ENCODE measurements at regions of chr20 and their contacts with region 1.

Region 1: DNA sequence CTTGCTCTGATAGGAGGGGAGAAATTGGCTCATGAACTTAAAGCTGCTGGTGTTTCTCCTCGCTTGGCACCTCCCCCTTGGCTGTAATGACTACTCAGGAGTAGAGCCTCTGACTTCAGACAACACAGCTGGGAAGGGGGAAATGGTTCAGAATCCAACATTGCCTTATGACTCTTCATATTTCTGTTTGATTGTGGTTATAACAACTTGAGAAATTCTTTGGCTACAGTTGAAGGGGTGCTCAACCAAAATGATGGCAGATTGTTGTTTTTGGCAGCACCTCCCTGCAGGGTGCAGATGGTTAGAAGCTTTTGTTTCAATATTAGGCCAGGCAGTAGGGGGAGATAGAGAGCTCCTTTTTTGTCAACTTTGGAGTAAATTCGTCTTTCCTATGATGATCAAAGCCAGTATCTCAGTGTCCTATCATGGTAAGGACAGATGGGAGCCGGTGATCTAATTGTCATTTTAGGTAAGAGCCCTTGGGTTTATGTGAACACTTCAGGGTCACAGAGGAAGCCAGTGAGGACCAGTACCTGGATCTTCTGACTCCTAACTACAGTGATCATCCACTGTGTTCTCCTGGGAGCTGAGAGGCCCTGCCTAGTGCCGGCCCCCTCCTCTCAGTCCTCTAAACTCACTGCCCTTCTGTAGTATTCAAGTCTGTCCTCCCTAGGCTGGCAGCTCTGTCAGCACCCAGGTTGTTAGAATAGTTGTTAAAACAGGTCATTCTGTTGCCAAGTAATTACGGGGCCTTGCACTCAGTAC is 39.9 kb downstream of the RPRD1B start:
- DNase-seq: peak; percentile 25
- ATAC-seq: peak; percentile 77
- H3K4me3 Mint-ChIP-seq: no peak overlapping the region
- H3K27ac Mint-ChIP-seq: no peak overlapping the region
- H3K4me1 Mint-ChIP-seq: peaks cover 9% of the 10 kb centered on the region
- H3K27me3 Mint-ChIP-seq: no peaks in the 10 kb centered on the region
- CTCF ChIP-seq: peak; percentile 76

Region 2: GRCh38 chr20:37932900-37933299 is 140.6 kb before region 1 on chr20:
- CTCF ChIA-PET with region 1: no interaction called
- POLR2A ChIA-PET with region 1: no interaction called
- intact Hi-C with region 1: no loop called
- DNase-seq: no peak
- ATAC-seq: no peak
- H3K4me3 Mint-ChIP-seq: no peak overlapping the region
- H3K27ac Mint-ChIP-seq: no peak overlapping the region
- H3K4me1 Mint-ChIP-seq: no peaks in the 10 kb centered on the region
- H3K27me3 Mint-ChIP-seq: peaks cover 4% of the 10 kb centered on the region
- CTCF ChIP-seq: no peak

Region 3: DNA sequence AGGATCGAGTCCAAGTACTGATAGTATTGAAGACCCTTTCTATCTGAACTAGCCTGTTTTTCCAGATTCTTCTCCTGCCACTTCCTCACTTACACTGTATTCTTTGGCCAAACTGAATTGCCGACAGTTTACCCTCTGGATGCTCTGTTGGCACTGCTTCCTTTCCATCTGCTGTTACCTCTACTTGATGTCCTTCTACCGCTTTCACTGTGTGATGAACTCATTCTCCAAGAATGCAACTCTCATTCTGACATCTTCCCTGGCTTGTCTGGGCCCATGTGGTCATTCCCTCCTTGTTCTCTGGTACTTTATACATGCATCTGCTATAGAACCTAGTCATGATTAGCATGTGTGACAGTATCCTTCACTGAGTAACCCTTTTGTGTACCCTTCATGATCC is 23.7 kb before region 1 on chr20:
- CTCF ChIA-PET with region 1: interaction called, 22 read pairs
- POLR2A ChIA-PET with region 1: no interaction called
- intact Hi-C with region 1: no loop called
- DNase-seq: no peak
- ATAC-seq: peak; percentile 30
- H3K4me3 Mint-ChIP-seq: no peak overlapping the region
- H3K27ac Mint-ChIP-seq: peak overlapping the region; percentile 69
- H3K4me1 Mint-ChIP-seq: peaks cover 51% of the 10 kb centered on the region
- H3K27me3 Mint-ChIP-seq: no peaks in the 10 kb centered on the region
- CTCF ChIP-seq: no peak

Region 4: DNA sequence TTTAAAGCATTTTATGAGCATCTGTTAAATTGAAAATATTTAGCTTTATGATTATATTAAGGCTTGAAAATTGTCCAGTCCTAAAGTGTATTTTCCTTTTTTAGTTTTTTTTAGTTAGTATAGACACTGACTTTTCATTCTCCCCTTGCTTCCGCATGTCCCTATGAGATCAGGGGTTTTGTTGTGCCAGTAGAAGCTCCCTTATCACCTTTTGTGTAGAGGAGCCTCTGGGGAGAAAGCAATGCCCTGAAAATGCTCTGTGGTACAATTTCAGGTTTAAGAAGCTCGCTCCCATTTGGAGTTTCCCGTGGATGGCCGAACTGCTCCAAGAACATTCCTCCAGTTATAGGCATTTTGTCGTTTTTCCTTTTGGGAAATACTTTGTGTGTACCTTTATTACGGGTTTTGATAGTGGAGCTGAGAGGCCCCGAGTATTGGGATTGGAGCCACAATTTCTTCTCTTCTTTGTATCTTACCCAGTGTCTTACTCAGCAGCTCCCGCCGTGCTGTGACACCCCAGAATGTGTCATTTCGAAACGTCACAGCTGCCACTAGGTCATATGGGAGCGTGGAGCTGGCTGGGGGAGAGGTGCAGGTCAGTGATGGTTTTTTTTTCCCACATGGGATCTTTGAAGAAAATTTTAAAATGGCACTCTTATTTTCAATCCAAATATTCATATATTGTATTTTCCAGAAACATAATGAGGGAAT is 10.0 kb after region 1 on chr20:
- CTCF ChIA-PET with region 1: interaction called, 13 read pairs
- POLR2A ChIA-PET with region 1: interaction called, 3 read pairs
- intact Hi-C with region 1: no loop called
- DNase-seq: no peak
- ATAC-seq: no peak
- H3K4me3 Mint-ChIP-seq: no peak overlapping the region
- H3K27ac Mint-ChIP-seq: no peak overlapping the region
- H3K4me1 Mint-ChIP-seq: peaks cover 13% of the 10 kb centered on the region
- H3K27me3 Mint-ChIP-seq: no peaks in the 10 kb centered on the region
- CTCF ChIP-seq: no peak

Region 5: DNA sequence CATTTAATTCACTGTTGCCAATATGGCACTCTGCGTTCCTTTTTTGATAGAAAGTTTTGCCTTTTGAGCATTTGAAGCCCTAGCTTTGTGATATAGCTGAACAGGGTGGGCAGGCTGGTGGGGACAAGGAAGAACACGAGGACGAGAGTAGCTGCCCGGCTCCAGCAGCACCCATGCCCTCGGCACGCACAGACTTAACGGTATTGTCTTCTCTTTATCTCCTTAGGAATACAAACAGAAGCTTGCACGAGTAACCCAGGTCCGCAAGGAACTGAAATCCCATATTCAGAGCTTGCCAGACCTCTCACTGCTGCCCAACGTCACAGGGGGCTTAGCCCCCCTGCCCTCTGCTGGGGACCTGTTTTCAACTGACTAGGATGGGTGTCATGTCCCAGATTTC is 16.0 kb after region 1 on chr20:
- CTCF ChIA-PET with region 1: interaction called, 13 read pairs
- POLR2A ChIA-PET with region 1: interaction called, 3 read pairs
- intact Hi-C with region 1: no loop called
- DNase-seq: no peak
- ATAC-seq: no peak
- H3K4me3 Mint-ChIP-seq: no peak overlapping the region
- H3K27ac Mint-ChIP-seq: no peak overlapping the region
- H3K4me1 Mint-ChIP-seq: peaks cover 22% of the 10 kb centered on the region
- H3K27me3 Mint-ChIP-seq: no peaks in the 10 kb centered on the region
- CTCF ChIP-seq: no peak

Measured in activated CD8-positive, alpha-beta T cell treated with anti-CD3 and anti-CD28 coated beads for 36 hours (primary cell).